ENCODE measurements at regions of chr6 and their contacts with region 1.

Region 1: GRCh38 chr6:27902335-27903314 is 9.6 kb downstream of the OR2B2 start:
- DNase-seq: peak; percentile 85
- ATAC-seq: peak; percentile 95
- H3K4me3 ChIP-seq: peak overlapping the region; percentile 60 to 79 (median 69)
- H3K27ac ChIP-seq: peak overlapping the region; percentile 57
- H3K4me1 ChIP-seq: peaks cover 25% of the 10 kb centered on the region
- H3K27me3 ChIP-seq: no peaks in the 10 kb centered on the region
- CTCF ChIP-seq: no peak
- EP300 ChIP-seq: no peak
- POLR2A ChIP-seq: no peak
- RAD21 ChIP-seq: peak; percentile 49; the same call in 1 of the 2 replicates

Region 2: GRCh38 chr6:27177485-27178406 is 724.9 kb before region 1 on chr6:
- CTCF ChIA-PET with region 1: no interaction called
- POLR2A ChIA-PET with region 1: no interaction called
- in situ Hi-C with region 1: loop called (anchors 10 kb)
- intact Hi-C with region 1: loop called (anchors 5 kb)
- DNase-seq: peak; percentile 65
- ATAC-seq: peak; percentile 91
- H3K4me3 ChIP-seq: peak overlapping the region; percentile 86 to 100 (median 97)
- H3K27ac ChIP-seq: peak overlapping the region; percentile 50
- H3K4me1 ChIP-seq: peaks cover 18% of the 10 kb centered on the region
- H3K27me3 ChIP-seq: peaks cover 0 to 12% of the 10 kb centered on the region in 2 experiments; a peak in 2 of 5 replicates
- CTCF ChIP-seq: peak; percentile 58
- EP300 ChIP-seq: no peak
- POLR2A ChIP-seq: no peak
- RAD21 ChIP-seq: peak; percentile 61

Region 3: DNA sequence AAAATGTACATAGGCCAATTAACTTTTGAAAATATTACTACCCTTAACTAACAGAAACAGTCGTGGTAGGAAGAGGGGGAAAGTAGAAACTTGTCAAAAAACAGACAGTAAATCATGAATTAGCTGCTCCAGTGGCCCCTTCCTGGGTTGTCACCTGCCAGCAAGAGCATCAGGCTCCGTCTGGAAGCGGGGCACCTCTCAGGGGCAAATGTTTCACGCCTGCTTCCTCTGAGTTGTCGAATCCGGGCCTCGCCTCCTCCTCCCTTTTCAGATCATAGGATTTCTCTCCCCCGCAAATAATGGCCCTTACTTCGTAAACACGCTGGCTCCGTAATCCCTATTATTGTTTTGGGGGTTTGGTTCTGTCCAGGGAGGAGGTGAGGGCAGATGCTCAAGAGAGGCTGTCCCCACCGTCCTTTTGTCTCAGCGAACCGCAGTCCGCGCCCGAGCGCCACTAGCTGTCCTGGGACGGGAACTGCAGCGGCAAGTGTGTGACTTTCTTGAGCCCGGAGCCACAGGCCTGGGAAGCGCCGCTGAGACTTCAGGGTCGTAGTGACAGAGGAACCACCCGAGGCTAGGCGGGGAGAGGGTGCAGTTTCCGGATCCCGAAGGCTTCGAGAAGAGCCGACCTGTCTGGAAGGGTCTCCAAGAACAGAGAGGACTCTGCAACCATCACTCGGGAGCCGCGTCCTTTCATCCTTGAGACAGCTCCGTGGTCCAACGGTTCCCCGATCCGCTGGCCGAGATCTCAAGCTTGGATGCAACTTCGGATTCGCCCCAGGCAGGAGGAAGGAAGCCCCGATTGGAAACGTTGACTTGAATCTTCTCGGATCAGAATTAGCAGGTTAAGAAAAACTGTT is 215.2 kb before region 1 on chr6:
- CTCF ChIA-PET with region 1: no interaction called
- POLR2A ChIA-PET with region 1: no interaction called
- in situ Hi-C with region 1: no loop called
- intact Hi-C with region 1: loop called (anchors 2 kb)
- DNase-seq: peak; percentile 79
- ATAC-seq: peak; percentile 85
- H3K4me3 ChIP-seq: peak overlapping the region; percentile 65 to 93 (median 78)
- H3K27ac ChIP-seq: peak overlapping the region; percentile 15
- H3K4me1 ChIP-seq: peaks cover 56% of the 10 kb centered on the region
- H3K27me3 ChIP-seq: no peaks in the 10 kb centered on the region; a peak in 1 of 5 replicates
- CTCF ChIP-seq: peak; percentile 95
- EP300 ChIP-seq: no peak
- POLR2A ChIP-seq: no peak
- RAD21 ChIP-seq: peak; percentile 70

Region 4: DNA sequence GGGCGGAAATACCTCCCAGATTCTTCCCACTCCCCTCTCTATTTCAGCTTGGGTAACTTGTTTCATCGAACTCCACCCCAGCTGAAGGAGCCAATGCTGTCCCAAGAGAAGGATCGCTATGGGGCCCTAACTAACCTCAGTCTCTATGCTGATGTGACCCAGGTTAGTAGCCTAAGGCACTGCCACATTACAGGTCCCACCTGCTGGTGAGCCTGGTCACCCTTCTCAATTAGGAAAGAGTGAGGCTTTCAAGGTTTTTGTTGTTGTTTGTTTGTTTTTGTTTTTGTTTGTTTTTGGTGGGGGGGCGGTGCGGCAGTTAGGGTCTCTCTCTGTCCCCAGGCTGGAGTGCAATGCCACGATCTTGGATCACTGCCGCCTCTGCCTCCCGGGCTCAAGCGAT is 158.8 kb before region 1 on chr6:
- CTCF ChIA-PET with region 1: no interaction called
- POLR2A ChIA-PET with region 1: no interaction called
- in situ Hi-C with region 1: no loop called
- intact Hi-C with region 1: no loop called
- DNase-seq: no peak
- ATAC-seq: peak; percentile 33; the same call in 1 of the 3 replicates
- H3K4me3 ChIP-seq: no peak overlapping the region
- H3K27ac ChIP-seq: no peak overlapping the region
- H3K4me1 ChIP-seq: peaks cover 11% of the 10 kb centered on the region
- H3K27me3 ChIP-seq: no peaks in the 10 kb centered on the region; a peak in 1 of 5 replicates
- CTCF ChIP-seq: no peak
- EP300 ChIP-seq: no peak
- POLR2A ChIP-seq: no peak
- RAD21 ChIP-seq: no peak

Region 5: GRCh38 chr6:28080631-28081485 is 178.2 kb after region 1 on chr6:
- CTCF ChIA-PET with region 1: no interaction called
- POLR2A ChIA-PET with region 1: no interaction called
- in situ Hi-C with region 1: no loop called
- intact Hi-C with region 1: loop called (anchors 10 kb)
- DNase-seq: peak; percentile 95
- ATAC-seq: peak; percentile 95
- H3K4me3 ChIP-seq: peak overlapping the region; percentile 77 to 89 (median 87)
- H3K27ac ChIP-seq: peak overlapping the region; percentile 78
- H3K4me1 ChIP-seq: peaks cover 34% of the 10 kb centered on the region
- H3K27me3 ChIP-seq: no peaks in the 10 kb centered on the region; a peak in 1 of 5 replicates
- CTCF ChIP-seq: peak; percentile 28
- EP300 ChIP-seq: peak in 1 of 2 experiments; percentile 61; a peak in 1 of 4 replicates
- POLR2A ChIP-seq: peak; percentile 55 to 56; a peak in 3 of 4 replicates
- RAD21 ChIP-seq: peak; percentile 57; the same call in 1 of the 2 replicates